ENCODE measurements at regions of chr4 and their contacts with region 1.

Region 1: GRCh38 chr4:185597532-185598188 is 62.4 kb upstream of the PDLIM3 start:
- DNase-seq: peak; percentile 24
- H3K4me3 ChIP-seq: no peak overlapping the region
- CTCF ChIP-seq: peak; percentile 86

Region 2: GRCh38 chr4:185425647-185426352 is 171.9 kb before region 1 on chr4 and contains the start of gene UFSP2:
- CTCF ChIA-PET with region 1: interaction called, 32 read pairs
- POLR2A ChIA-PET with region 1: no interaction called
- DNase-seq: peak; percentile 51
- H3K4me3 ChIP-seq: peak within 1 kb of the TSS; percentile 95
- CTCF ChIP-seq: peak; percentile 0

Region 3: GRCh38 chr4:185513489-185514181 is 84.0 kb before region 1 on chr4:
- CTCF ChIA-PET with region 1: interaction called, 11 read pairs
- POLR2A ChIA-PET with region 1: no interaction called
- DNase-seq: no peak
- H3K4me3 ChIP-seq: no peak overlapping the region
- CTCF ChIP-seq: no peak

Region 4: DNA sequence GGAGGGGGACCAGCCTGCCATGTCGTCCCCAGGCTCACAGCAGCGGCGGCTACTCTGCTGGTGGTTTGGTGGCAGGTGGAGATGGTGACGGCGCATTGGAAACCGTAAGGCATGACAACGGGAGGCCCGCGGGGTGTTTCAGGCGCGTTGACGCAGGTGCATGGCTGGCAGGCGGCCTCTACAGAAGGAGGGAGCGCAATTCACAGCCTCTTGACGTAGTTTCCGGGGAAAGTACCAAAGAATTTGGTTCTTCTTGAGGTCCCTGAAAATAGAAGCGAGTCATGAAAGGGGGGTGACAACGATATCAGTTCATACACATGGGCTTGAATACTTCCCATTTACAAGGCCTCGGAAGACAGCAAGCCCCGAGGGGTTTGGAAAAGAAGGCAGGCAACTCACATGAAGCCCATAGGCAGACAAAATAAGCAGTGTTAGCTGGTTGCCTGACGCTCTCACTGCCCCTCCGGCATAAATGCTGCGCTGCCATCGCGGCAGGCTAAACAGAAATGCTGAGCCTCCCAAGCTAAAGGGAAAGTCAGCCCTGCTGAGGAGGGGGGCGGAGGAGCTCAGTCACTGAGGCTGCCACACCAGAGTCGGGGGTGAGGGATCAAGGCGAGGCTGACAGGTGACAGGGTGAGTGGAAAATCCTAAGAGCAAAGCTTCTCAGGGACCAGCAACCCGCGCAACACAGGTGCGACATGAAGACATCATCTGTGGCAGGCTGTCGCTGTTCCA is 10.1 kb before region 1 on chr4:
- CTCF ChIA-PET with region 1: interaction called, 29 read pairs
- POLR2A ChIA-PET with region 1: no interaction called
- DNase-seq: no peak
- H3K4me3 ChIP-seq: no peak overlapping the region
- CTCF ChIP-seq: no peak

Region 5: DNA sequence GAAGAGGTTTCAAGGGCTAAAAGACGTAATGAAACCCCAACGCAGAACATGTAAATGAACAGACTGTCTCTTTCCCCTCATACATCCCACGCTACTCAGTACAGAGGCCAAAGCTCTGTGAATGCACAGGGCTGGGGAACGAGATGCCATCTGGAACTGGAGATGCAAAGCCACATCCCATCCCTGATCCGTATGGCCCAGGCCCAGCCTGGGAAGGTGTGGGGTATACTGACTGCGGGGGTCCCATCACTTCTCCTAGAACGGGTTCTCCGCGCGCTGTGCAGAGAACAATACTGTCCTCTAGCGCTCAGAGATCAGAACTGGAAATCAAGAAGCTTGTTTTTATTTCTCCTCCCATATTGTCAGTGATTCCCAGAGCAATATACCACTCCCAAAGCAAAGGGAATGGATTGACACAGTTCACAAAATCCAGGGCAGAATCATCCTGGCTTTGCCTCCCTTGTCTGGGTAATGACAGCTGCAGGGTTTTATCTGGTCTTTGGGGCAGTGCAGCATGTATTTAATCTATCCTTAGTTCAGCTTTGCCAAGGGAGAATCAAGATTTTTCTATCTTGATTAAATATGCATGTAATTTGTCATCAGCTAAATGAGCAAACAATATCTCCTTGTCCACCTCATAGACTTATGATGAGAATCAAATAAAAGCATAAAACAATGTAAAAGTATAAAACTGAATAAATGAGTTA is 424.0 kb after region 1 on chr4:
- CTCF ChIA-PET with region 1: interaction called, 27 read pairs
- POLR2A ChIA-PET with region 1: no interaction called
- DNase-seq: no peak
- H3K4me3 ChIP-seq: no peak overlapping the region
- CTCF ChIP-seq: peak; percentile 76

Measured in AG04449 (cell line).